ENCODE measurements at regions of chr11 and their contacts with region 1.

Region 1: DNA sequence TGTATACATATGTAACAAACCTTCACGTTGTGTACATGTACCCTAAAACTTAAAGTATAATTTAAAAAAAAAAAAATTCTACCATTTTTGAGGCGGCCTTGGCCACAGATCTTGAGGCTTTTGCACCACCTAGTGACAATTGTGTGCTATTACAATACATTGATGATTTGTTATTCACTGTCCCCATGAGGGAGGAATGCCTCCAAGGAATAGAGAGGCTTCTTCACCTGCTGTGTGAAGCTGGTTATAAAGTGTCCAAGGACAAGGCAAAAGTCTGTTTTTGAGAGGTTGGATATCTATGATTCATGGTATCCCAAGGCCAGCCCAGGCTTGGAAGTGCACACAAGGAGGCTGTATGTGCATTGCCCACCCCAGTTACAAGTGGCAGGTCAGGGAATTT is 30.7 kb downstream of the SLC22A25 start:
- DNase-seq: peak; percentile 41 to 56 (median 48)
- ATAC-seq: no peak; the same call in 2 of the 3 replicates
- H3K4me3 ChIP-seq: no peak overlapping the region
- H3K27ac ChIP-seq: no peak overlapping the region
- H3K4me1 ChIP-seq: no peaks in the 10 kb centered on the region
- H3K27me3 ChIP-seq: no peaks in the 10 kb centered on the region; a peak in 1 of 5 replicates
- CTCF ChIP-seq: peak; percentile 56 to 69 (median 63); a peak in 5 of 6 replicates
- EP300 ChIP-seq: no peak
- POLR2A ChIP-seq: no peak
- RAD21 ChIP-seq: peak; percentile 72 to 79

Region 2: DNA sequence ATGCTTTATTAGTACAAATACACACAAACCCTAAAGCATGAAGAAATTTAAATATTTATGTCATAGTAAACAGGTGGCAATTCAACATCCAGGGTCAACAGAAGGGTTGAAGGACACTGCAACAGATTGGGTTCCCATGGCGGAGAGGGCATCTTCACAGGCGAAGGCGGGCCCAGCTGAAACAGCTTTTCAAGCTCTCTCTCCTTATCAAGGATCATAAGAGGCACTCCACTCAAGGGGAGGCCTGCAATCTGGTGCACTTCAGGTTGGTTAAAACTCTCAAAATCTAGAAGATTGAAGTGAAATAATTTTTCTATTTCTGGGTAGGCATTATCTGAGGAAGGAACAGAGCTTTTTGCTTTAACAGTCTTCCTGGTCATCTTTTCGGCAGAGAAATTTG is 180.3 kb before region 1 on chr11:
- CTCF ChIA-PET with region 1: interaction called, 12 read pairs
- POLR2A ChIA-PET with region 1: no interaction called
- in situ Hi-C with region 1: no loop called
- intact Hi-C with region 1: loop called (anchors 2 kb)
- DNase-seq: no peak
- ATAC-seq: no peak
- H3K4me3 ChIP-seq: no peak overlapping the region
- H3K27ac ChIP-seq: no peak overlapping the region
- H3K4me1 ChIP-seq: no peaks in the 10 kb centered on the region
- H3K27me3 ChIP-seq: peaks cover 5 to 7% of the 10 kb centered on the region in 2 experiments; a peak in 4 of 5 replicates
- CTCF ChIP-seq: no peak
- EP300 ChIP-seq: no peak
- POLR2A ChIP-seq: no peak
- RAD21 ChIP-seq: no peak

Region 3: GRCh38 chr11:63132985-63133775 is 79.6 kb before region 1 on chr11:
- CTCF ChIA-PET with region 1: interaction called, 8 read pairs
- POLR2A ChIA-PET with region 1: interaction called, 3 read pairs
- in situ Hi-C with region 1: no loop called
- intact Hi-C with region 1: loop called (anchors 5 kb)
- DNase-seq: no peak
- ATAC-seq: no peak
- H3K4me3 ChIP-seq: no peak overlapping the region
- H3K27ac ChIP-seq: no peak overlapping the region
- H3K4me1 ChIP-seq: no peaks in the 10 kb centered on the region
- H3K27me3 ChIP-seq: peaks cover 0 to 4% of the 10 kb centered on the region in 2 experiments; a peak in 1 of 5 replicates
- CTCF ChIP-seq: no peak
- EP300 ChIP-seq: no peak
- POLR2A ChIP-seq: no peak
- RAD21 ChIP-seq: no peak

Measured in K562 (cell line).